Common myeloid progenitor, CD34-positive (primary cell): ENCODE measurements at regions of chr10 and their contacts with region 1.

Region 1: GRCh38 chr10:103763374-103764202 is 91.8 kb downstream of the SH3PXD2A start:
- DNase-seq: peak; percentile 54 to 87 (median 87)
- H3K4me3 ChIP-seq: peak overlapping the region in 1 of 7 experiments; percentile 26
- H3K27ac ChIP-seq: no peak overlapping the region
- H3K4me1 ChIP-seq: peaks cover 9 to 94% (median 50%) of the 10 kb centered on the region in 4 experiments
- H3K27me3 ChIP-seq: no peaks in the 10 kb centered on the region

Region 2: DNA sequence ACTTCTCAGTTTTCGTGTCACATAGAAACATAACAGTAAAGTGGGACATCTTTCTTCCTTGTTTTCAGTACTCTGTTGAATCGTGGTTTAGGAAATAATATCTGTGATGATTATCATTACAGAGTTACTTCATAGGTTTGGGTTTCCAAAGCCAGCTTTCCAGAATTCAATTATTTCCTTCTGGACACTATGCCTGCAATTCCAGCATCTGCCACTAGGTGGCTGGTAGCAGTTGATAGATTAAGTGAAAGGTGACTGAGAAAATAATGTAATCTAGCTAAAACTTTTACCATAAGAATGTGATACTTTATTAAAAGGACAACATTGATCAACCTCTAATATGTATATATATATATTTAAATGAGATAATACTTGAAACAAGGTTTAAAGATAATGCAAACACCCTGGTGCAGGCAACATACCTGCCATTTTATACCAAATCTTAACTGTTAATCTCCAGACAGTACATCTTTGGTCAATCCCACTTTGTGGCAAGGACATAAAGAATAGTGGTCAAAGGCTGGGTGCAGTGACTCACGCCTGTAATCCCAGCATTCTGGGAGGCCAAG is 10.8 kb before region 1 on chr10:
- CTCF ChIA-PET with region 1: interaction called, 13 read pairs
- POLR2A ChIA-PET with region 1: interaction called, 3 read pairs
- DNase-seq: peak in 1 of 3 donors; percentile 33
- H3K4me3 ChIP-seq: no peak overlapping the region
- H3K27ac ChIP-seq: no peak overlapping the region
- H3K4me1 ChIP-seq: peaks cover 0 to 25% (median 10%) of the 10 kb centered on the region in 4 experiments
- H3K27me3 ChIP-seq: no peaks in the 10 kb centered on the region

Region 3: DNA sequence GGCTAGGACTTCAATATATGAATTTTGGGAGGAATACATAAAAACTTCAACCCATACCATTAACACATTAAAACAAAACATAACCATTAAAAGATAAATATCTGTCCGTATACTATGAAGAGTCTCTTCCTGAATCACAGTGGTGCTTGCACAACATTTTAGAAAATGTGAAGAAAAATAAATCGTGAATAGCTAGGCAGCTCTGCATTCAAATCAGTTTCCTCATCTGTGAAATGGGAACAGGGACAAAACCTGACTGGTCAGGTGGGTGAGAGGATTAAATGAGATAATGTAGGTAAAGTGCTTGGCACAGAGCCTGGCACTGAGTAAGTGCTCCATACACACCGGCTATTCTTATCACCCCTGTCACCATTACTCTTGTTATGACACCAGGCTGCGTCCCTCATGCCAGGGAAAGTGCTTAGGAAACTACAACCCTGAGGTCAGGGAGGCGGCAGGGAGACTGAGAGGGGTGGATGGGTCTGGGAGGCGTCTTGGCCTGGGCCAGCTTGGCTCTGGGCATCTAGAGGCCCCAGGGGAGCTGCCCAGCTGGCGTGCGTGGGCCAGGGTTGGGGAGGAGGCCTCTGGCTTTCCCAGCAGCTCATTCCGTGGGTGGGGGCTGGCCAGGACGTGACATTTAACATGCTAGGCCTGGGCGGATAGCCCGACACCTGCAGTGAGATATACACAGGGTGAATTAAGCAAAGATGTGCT is 13.4 kb after region 1 on chr10:
- CTCF ChIA-PET with region 1: interaction called, 11 read pairs
- POLR2A ChIA-PET with region 1: interaction called, 3 read pairs
- DNase-seq: no peak
- H3K4me3 ChIP-seq: no peak overlapping the region
- H3K27ac ChIP-seq: no peak overlapping the region
- H3K4me1 ChIP-seq: peaks cover 0 to 34% (median 16%) of the 10 kb centered on the region in 4 experiments
- H3K27me3 ChIP-seq: peaks cover 0 to 7% (median 0%) of the 10 kb centered on the region in 5 experiments